Activated CD4-positive, alpha-beta T cell treated with anti-CD3 and anti-CD28 coated beads for 36 hours (primary cell): ENCODE measurements at regions of chr6 and their contacts with region 1.

Region 1: GRCh38 chr6:37018198-37019064 is 13.0 kb downstream of the FGD2 start:
- DNase-seq: peak; percentile 97
- ATAC-seq: peak; percentile 95
- H3K4me3 Mint-ChIP-seq: no peak overlapping the region
- H3K27ac Mint-ChIP-seq: peak overlapping the region; percentile 61
- H3K4me1 Mint-ChIP-seq: peaks cover 45% of the 10 kb centered on the region
- H3K27me3 Mint-ChIP-seq: no peaks in the 10 kb centered on the region

Region 2: DNA sequence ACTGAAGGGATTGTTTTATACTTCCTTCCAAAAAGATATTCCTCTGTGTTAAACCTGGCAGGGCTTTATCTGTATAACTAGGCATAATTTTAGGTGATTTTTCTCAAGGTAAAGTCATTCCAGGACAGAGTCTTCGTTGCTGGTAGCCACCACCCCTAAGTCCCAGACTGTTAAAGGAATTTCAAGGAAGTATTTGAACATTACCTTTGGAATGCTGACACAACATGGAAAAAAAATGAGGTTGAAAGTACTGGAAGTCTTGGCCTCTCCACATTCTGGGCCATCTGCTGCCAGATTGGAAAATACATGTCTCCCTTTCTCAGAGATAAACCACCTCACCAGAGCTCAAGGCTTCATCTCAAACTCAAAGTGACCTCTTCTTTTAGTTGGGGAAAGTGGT is 604.0 kb before region 1 on chr6:
- CTCF ChIA-PET with region 1: no interaction called
- POLR2A ChIA-PET with region 1: no interaction called
- intact Hi-C with region 1: no loop called
- DNase-seq: no peak
- ATAC-seq: no peak
- H3K4me3 Mint-ChIP-seq: no peak overlapping the region
- H3K27ac Mint-ChIP-seq: no peak overlapping the region
- H3K4me1 Mint-ChIP-seq: no peaks in the 10 kb centered on the region
- H3K27me3 Mint-ChIP-seq: peaks cover 5% of the 10 kb centered on the region

Region 3: DNA sequence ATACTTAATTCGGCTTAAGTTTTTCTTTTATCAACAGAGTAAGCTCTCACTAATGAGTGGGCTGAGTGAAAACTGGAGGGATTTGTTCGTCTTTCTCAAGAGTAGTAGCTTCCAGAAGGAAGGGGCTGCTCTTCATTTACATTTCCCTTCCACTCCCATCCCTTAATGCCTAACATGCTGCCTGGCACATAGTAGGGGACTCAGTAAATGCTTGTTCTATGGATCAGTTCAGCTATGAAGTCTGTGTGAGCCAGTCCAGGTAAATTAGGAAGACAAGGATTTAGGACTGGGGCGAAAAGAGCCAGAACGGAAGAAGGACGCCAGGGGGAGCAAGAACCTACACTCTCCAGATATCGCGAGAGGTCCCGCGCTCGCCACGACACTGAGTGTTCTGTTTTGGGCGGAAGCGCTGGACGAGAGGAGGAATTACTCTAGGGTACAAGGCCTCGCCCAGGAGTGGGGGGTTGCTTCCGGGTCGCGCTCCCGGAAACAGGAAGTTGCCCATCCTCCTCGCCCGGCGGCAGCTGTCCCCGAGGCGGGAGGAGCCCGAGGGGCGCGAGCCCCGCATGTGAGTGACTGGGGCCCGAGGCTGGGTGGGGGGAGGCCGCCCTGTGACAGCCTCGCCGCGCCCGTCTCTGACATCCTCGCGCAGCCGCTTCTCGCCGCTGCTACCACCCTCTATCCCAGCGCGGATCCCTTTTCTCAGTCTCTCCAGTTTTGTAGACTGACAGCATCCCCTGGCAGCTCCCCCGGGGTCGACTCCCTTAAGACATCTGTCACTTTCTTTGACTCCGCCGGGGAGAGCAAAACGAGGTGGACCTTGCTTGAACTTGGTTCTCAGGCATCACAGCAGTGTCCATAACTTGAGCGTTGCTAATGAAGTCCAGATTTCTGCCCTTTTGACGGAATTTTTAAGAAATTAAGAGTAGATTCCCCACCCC is 132.7 kb before region 1 on chr6 and contains the start of gene C6orf89:
- CTCF ChIA-PET with region 1: interaction called, 47 read pairs
- POLR2A ChIA-PET with region 1: no interaction called
- intact Hi-C with region 1: loop called (anchors 1 kb)
- DNase-seq: peak; percentile 99
- ATAC-seq: peak; percentile 100
- H3K4me3 Mint-ChIP-seq: peak within 1 kb of the TSS; percentile 89
- H3K27ac Mint-ChIP-seq: peak within 1 kb of the TSS; percentile 97
- H3K4me1 Mint-ChIP-seq: peaks cover 31% of the 10 kb centered on the region
- H3K27me3 Mint-ChIP-seq: no peaks in the 10 kb centered on the region
- total RNA-seq, gene C6orf89: 29.5 to 36.2 TPM

Region 4: DNA sequence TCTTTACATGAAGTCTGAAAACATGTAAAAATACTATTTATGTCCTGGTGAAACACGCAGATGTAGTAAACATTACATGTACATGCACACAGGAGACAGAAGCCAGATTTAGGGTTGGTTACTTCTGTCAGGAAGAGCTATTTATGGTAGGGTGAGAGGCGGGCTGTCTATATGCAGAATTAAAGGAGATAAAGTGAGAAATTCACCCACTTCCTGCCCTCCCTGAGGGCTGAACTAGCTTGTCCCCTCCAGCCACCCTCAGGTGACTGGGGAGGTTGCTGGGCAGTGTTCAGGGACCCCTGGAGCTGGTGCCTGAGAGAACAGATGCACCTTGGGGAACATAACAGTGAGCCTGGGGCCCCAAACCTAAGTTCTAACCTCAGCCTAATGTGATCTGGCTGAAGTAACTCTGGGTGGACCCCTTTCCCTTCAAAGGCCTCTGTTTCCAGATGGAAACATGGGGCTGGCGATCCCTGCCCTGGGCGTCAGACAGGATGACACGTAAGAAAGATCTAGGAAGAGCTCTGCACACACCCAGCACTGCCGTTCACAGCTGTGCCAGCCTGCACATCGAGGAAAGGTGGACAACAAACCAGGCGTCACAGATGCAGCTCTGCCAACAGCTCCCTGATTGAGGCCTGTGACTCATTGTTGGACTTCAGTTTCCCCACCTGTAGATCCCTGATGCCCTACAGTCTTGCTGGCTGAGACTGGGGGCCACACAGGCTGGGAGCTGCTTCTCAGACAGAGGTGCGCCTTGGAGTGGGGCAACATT is 62.6 kb before region 1 on chr6:
- CTCF ChIA-PET with region 1: interaction called, 12 read pairs
- POLR2A ChIA-PET with region 1: no interaction called
- intact Hi-C with region 1: no loop called
- DNase-seq: peak; percentile 24
- ATAC-seq: peak; percentile 43
- H3K4me3 Mint-ChIP-seq: peak overlapping the region; percentile 51
- H3K27ac Mint-ChIP-seq: peak overlapping the region; percentile 66
- H3K4me1 Mint-ChIP-seq: peaks cover 45% of the 10 kb centered on the region
- H3K27me3 Mint-ChIP-seq: no peaks in the 10 kb centered on the region

Region 5: GRCh38 chr6:37005061-37005810 is 13.2 kb before region 1 on chr6 and contains the start of gene FGD2:
- CTCF ChIA-PET with region 1: interaction called, 17 read pairs
- POLR2A ChIA-PET with region 1: no interaction called
- intact Hi-C with region 1: no loop called
- DNase-seq: no peak
- ATAC-seq: no peak
- H3K4me3 Mint-ChIP-seq: no peak within 1 kb of the TSS
- H3K27ac Mint-ChIP-seq: no peak within 1 kb of the TSS
- H3K4me1 Mint-ChIP-seq: peaks cover 12% of the 10 kb centered on the region
- H3K27me3 Mint-ChIP-seq: no peaks in the 10 kb centered on the region
- total RNA-seq, gene FGD2: 0.50 to 0.63 TPM

Region 6: GRCh38 chr6:37207903-37208456 is 189.5 kb after region 1 on chr6:
- CTCF ChIA-PET with region 1: interaction called, 586 read pairs
- POLR2A ChIA-PET with region 1: interaction called, 15 read pairs
- intact Hi-C with region 1: loop called (anchors 1 kb)
- DNase-seq: peak; percentile 95
- ATAC-seq: peak; percentile 73
- H3K4me3 Mint-ChIP-seq: no peak overlapping the region
- H3K27ac Mint-ChIP-seq: peak overlapping the region; percentile 53
- H3K4me1 Mint-ChIP-seq: peaks cover 67% of the 10 kb centered on the region
- H3K27me3 Mint-ChIP-seq: no peaks in the 10 kb centered on the region

Region 7: DNA sequence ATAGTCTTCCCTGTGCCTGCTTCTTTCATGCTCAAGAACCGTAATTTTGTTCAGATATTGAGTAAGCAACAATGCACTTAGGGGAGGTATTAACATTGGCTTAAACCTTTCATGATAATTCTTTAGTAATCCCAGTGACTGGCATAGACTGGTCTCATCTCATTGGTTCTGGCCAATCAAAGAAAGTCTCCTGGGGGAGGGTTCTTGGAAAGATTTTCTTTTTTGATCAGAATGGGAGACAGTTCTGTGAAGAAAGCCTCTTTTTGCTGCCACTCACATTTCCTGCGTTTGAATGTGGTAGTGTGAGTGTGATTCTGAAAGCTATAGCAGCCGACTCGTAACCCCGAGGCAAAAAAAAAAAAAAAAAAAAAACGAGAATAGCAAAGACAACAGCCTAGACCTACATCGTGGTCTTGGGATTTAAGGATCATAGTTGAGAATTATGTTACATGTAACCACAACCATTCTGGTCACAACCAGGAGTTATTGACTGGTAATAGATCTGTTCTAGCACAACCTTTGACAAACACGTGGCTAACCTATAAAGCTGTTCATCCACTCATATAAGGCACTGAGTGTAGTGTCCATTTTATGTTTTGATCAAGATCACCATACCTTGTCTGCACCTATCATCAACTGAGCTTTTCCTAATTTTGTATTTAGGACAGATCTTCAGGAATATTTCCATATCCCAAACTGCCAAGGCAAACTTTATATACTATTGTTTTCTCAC is 254.6 kb after region 1 on chr6:
- CTCF ChIA-PET with region 1: no interaction called
- POLR2A ChIA-PET with region 1: no interaction called
- intact Hi-C with region 1: no loop called
- DNase-seq: peak; percentile 28
- ATAC-seq: peak; percentile 85
- H3K4me3 Mint-ChIP-seq: peak overlapping the region; percentile 33
- H3K27ac Mint-ChIP-seq: peak overlapping the region; percentile 69
- H3K4me1 Mint-ChIP-seq: peaks cover 46% of the 10 kb centered on the region
- H3K27me3 Mint-ChIP-seq: no peaks in the 10 kb centered on the region

Region 8: DNA sequence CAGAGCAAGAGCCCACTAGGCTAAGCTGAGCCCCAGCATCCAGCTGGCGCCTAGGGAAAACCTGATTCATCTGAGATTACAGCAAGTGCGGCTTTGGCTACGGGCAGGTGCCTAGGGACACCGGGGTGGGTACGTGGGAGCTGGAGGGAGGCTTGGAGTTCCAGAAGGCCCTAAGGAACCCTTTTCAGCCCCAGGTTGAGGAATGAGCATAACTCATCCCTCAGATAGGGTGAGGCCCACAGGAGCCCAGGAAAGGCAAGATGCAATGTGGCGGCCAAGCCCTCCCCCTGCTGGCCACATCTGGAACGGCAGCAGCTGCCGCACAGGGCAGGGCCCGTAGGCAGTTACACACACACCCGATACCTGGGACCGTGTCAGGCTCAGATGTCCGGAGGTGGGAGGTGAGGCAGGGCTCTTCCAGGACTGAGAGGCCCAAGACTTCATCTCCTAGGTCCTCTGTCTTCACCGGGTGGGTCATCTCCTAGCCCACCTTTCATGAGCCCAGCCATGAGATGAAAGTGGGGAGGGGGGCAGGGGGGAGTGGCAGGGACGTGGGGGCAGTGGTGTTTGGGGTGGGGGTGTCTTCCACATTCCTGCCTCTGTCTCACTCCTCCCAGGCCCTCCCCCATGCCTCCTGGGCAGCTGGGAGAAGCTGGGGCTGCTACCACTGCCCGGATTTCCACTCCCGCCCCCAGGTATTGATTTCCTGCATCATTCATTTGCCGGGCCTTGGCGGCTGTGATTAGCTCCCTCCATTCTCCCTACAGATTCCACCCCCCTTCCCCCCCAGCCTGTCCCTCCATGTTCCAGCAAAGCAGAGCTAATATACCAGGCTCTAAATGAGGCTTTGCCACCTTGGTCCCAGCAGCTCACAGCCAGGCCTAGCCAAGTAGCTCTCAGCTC is 673.7 kb after region 1 on chr6:
- CTCF ChIA-PET with region 1: no interaction called
- POLR2A ChIA-PET with region 1: no interaction called
- intact Hi-C with region 1: loop called in 1 of 2 experiments (anchors 1 kb)
- DNase-seq: peak; percentile 88
- ATAC-seq: peak; percentile 88
- H3K4me3 Mint-ChIP-seq: no peak overlapping the region
- H3K27ac Mint-ChIP-seq: no peak overlapping the region
- H3K4me1 Mint-ChIP-seq: peaks cover 23% of the 10 kb centered on the region
- H3K27me3 Mint-ChIP-seq: peaks cover 38% of the 10 kb centered on the region